ENCODE measurements at regions of chr9 and their contacts with region 1.

Region 1: DNA sequence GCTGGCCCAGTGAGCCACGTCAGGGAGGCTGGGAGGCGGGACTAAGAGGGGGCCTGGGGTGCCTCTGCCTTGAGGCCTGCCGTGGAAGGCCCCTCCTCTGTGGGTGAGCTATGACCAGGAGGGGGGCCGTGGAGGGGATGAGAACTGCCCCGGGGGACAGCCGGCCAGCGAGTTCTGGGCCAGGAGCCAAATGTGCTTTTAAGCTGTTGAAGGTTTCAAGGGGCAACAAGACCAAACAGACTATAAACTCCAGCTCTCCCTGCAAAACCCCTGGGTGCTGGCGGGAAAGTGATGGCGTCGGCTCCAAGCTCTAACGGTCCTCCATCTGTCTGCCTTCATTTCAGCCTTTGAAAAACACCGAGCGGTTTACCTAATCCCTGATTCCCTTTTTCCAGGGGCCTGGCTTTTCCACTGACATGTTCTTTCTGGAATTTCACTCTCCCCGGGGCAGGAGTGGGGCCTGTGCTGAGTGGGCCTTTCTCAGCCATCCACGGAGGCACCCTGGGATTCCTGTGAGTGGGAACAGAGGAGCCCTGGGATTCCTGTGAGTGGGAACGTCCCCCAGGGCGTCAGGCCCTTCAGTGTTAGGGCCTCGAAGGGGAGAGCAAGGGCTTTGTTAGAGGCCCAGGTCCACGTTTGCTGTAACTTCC is 65.6 kb downstream of the COL5A1 start:
- DNase-seq: peak; percentile 81
- ATAC-seq: peak; percentile 70 to 84

Region 2: GRCh38 chr9:134858051-134858841 is 151.1 kb after region 1 on chr9:
- intact Hi-C with region 1: no loop called
- DNase-seq: no peak
- ATAC-seq: peak in 1 of 2 donors; percentile 42

Region 3: GRCh38 chr9:135077497-135078200 is 370.5 kb after region 1 on chr9:
- intact Hi-C with region 1: loop called in 1 of 2 experiments (anchors 10 kb)
- DNase-seq: no peak
- ATAC-seq: peak in 1 of 2 donors; percentile 19

Measured in left cardiac atrium (tissue), 4 donors.